HEK293 (cell line): ENCODE measurements at regions of chr2 and their contacts with region 1.

Region 1: GRCh38 chr2:70190418-70191243 is at the start of gene C2orf42:
- H3K4me3 ChIP-seq: peak within 1 kb of the TSS; percentile 98
- H3K27ac ChIP-seq: peak within 1 kb of the TSS; percentile 90
- H3K4me1 ChIP-seq: no peaks in the 10 kb centered on the region; the same call in 1 of the 2 replicates
- CTCF ChIP-seq: 0 out of 2 replicates have a peak, but pooled peaks have one; percentile 13

Region 2: GRCh38 chr2:70142590-70143313 is 47.9 kb before region 1 on chr2:
- CTCF ChIA-PET with region 1: interaction called, 5 read pairs
- POLR2A ChIA-PET with region 1: interaction called, 10 read pairs
- H3K4me3 ChIP-seq: peak overlapping the region; percentile 54
- H3K27ac ChIP-seq: peak overlapping the region; percentile 91
- H3K4me1 ChIP-seq: peaks cover 6% of the 10 kb centered on the region; the same call in 1 of the 2 replicates
- CTCF ChIP-seq: peak; percentile 100

Region 3: GRCh38 chr2:70201831-70202806 is 11.5 kb after region 1 on chr2:
- CTCF ChIA-PET with region 1: interaction called, 3 read pairs
- POLR2A ChIA-PET with region 1: interaction called, 12 read pairs
- H3K4me3 ChIP-seq: no peak overlapping the region
- H3K27ac ChIP-seq: no peak overlapping the region
- H3K4me1 ChIP-seq: no peaks in the 10 kb centered on the region
- CTCF ChIP-seq: no peak

Region 4: GRCh38 chr2:70248181-70248847 is 57.7 kb after region 1 on chr2 and contains the start of gene TIA1:
- CTCF ChIA-PET with region 1: no interaction called
- POLR2A ChIA-PET with region 1: interaction called, 10 read pairs
- H3K4me3 ChIP-seq: peak within 1 kb of the TSS; percentile 89
- H3K27ac ChIP-seq: peak within 1 kb of the TSS; percentile 98
- H3K4me1 ChIP-seq: no peaks in the 10 kb centered on the region; the same call in 1 of the 2 replicates
- CTCF ChIP-seq: no peak; the same call in 1 of the 2 replicates

Region 5: DNA sequence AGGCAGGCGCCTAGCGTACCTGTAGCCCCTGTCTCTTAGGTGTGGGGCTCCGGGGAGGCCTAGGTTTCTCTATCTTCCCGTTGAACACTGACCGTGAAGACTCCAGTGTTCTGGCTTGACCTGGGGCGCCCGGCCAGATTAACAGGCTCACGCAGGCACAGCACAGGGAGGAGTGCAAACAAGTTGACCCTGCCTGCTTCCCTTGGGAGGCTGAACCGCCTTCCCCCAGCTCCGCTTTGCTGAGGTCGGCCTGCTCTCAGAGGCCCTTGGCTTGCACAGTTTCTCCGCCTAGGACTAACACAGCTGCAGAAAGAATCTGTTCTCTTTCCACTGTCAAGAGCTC is 67.9 kb after region 1 on chr2:
- CTCF ChIA-PET with region 1: no interaction called
- POLR2A ChIA-PET with region 1: interaction called, 28 read pairs
- H3K4me3 ChIP-seq: peak overlapping the region; percentile 85
- H3K27ac ChIP-seq: peak overlapping the region; percentile 75; the same call in 1 of the 2 replicates
- H3K4me1 ChIP-seq: 0 out of 2 replicates have a peak, but pooled peaks cover 10% of the 10 kb centered on the region
- CTCF ChIP-seq: no peak